CD4-positive, alpha-beta memory T cell (primary cell): ENCODE measurements at regions of chr19 and their contacts with region 1.

Region 1: DNA sequence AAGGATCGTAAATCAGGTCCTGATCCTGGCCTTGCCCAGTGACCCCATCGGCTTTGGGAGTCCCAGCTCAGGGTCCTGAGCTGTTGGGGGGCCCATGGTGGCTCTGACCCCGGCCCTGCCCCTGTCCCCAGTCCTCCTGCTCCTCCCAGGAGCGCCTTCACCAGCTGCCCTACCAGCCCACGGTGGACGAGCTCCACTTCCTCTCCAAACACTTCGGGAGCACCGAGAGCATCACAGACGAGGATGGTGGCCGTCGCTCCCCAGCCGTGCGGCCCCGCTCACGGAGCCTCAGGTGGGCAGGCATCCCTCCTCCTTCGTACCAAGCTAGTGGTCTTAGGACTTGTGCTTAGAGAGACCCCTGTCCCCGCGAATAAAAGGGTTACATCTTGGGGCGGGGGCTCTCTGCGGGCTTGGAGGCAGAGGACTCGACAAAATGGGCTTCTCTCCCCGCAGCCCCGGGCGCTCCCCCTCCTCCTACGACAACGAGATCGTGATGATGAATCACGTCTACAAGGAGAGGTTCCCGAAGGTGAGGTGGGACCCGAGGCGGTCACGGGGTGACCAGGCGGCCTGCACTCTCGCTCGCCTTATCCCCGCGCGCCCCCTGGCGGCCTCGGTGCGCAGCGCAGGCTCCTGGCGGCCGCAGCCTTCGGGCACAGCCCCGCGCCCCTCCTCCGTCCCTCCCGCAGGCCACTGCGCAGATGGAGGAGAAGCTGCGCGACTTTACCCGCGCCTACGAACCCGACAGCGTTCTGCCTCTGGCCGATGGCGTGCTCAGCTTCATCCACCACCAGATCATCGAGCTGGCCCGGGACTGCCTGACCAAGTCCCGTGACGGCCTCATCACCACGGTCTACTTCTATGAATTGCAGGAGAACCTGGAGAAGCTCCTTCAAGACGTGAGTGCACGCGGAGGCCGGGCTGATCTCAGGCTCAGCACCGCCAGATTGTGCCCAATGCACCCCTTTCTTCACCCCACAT is 9.1 kb downstream of the MAST1 start:
- DNase-seq: peak; percentile 70 to 80 (median 73)
- H3K4me3 ChIP-seq: no peak overlapping the region
- H3K4me3 Mint-ChIP-seq: peak overlapping the region in 3 of 8 donors; percentile 43 to 57 (median 57)
- H3K27ac ChIP-seq: no peak overlapping the region
- H3K27ac Mint-ChIP-seq: no peak overlapping the region
- H3K4me1 ChIP-seq: peaks cover 9% of the 10 kb centered on the region
- H3K4me1 Mint-ChIP-seq: peaks cover 0 to 4% (median 0%) of the 10 kb centered on the region in 4 donors
- H3K27me3 ChIP-seq: peaks cover 5% of the 10 kb centered on the region
- H3K27me3 Mint-ChIP-seq: peaks cover 17 to 19% of the 10 kb centered on the region in 2 donors

Region 2: DNA sequence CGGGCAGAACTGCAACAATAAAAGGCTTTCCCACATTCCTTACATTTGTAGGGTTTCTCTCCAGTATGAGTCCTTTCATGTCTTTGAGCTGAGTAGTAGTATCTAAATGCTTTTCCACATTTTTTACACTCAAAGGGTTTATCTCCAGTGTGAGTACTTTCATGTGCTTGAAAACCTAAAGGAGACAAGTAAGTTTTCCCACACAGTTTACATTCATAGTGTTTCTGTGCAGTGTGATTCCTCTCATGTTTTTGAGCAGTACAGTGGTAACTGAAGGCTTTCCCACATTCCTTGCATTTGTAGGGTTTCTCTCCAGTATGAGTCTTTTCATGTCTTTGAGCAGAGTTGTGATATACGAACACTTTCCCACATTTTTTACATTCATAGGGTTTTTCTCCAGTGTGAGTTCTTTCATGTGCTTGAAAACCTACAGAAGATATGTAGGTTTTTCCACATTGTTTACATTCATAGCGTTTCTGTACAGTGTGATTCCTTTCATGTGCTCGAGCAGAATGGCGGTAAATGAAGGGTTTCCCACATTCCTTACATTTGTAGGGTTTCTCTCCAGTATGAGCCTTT is 599.7 kb before region 1 on chr19:
- CTCF ChIA-PET with region 1: no interaction called
- POLR2A ChIA-PET with region 1: no interaction called
- intact Hi-C with region 1: no loop called
- DNase-seq: no peak
- H3K4me3 ChIP-seq: no peak overlapping the region
- H3K4me3 Mint-ChIP-seq: no peak overlapping the region
- H3K27ac ChIP-seq: no peak overlapping the region
- H3K27ac Mint-ChIP-seq: no peak overlapping the region
- H3K4me1 ChIP-seq: no peaks in the 10 kb centered on the region
- H3K4me1 Mint-ChIP-seq: no peaks in the 10 kb centered on the region
- H3K27me3 ChIP-seq: no peaks in the 10 kb centered on the region
- H3K27me3 Mint-ChIP-seq: no peaks in the 10 kb centered on the region

Region 3: DNA sequence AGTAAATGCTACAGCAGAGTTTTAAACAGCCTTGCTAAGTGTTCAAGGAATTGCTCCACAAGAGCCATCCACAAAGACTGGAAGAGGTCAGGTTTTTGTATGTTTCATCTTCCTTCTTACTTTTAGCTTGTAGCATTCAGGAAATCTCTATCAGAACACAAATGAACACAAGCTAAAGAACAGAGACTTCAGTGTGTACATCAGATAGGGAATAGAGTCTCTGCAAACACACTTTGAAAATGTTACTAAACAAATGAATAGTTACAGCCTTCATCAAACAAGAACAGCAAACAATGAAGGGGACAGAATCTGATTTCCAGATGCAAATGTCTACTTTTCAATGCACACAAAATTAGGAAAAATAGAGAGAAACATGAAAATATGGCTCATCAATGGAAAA is 521.8 kb before region 1 on chr19:
- CTCF ChIA-PET with region 1: no interaction called
- POLR2A ChIA-PET with region 1: no interaction called
- intact Hi-C with region 1: no loop called
- DNase-seq: no peak
- H3K4me3 ChIP-seq: no peak overlapping the region
- H3K4me3 Mint-ChIP-seq: no peak overlapping the region
- H3K27ac ChIP-seq: no peak overlapping the region
- H3K27ac Mint-ChIP-seq: no peak overlapping the region
- H3K4me1 ChIP-seq: peaks cover 2% of the 10 kb centered on the region
- H3K4me1 Mint-ChIP-seq: peaks cover 14 to 26% (median 20%) of the 10 kb centered on the region in 4 donors
- H3K27me3 ChIP-seq: no peaks in the 10 kb centered on the region
- H3K27me3 Mint-ChIP-seq: no peaks in the 10 kb centered on the region

Region 4: GRCh38 chr19:12681074-12681951 is 166.1 kb before region 1 on chr19 and contains the start of gene DHPS:
- CTCF ChIA-PET with region 1: interaction called, 15 read pairs
- POLR2A ChIA-PET with region 1: no interaction called
- intact Hi-C with region 1: no loop called
- DNase-seq: peak; percentile 90 to 96 (median 94)
- H3K4me3 ChIP-seq: peak within 1 kb of the TSS; percentile 73 to 98
- H3K4me3 Mint-ChIP-seq: peak within 1 kb of the TSS; percentile 90 to 99 (median 98)
- H3K27ac ChIP-seq: peak within 1 kb of the TSS; percentile 98
- H3K27ac Mint-ChIP-seq: peak within 1 kb of the TSS; percentile 83 to 99 (median 97)
- H3K4me1 ChIP-seq: peaks cover 22% of the 10 kb centered on the region
- H3K4me1 Mint-ChIP-seq: peaks cover 12 to 35% (median 25%) of the 10 kb centered on the region in 4 donors
- H3K27me3 ChIP-seq: no peaks in the 10 kb centered on the region
- H3K27me3 Mint-ChIP-seq: no peaks in the 10 kb centered on the region
- total RNA-seq, gene DHPS: 195 to 197 TPM

Region 5: DNA sequence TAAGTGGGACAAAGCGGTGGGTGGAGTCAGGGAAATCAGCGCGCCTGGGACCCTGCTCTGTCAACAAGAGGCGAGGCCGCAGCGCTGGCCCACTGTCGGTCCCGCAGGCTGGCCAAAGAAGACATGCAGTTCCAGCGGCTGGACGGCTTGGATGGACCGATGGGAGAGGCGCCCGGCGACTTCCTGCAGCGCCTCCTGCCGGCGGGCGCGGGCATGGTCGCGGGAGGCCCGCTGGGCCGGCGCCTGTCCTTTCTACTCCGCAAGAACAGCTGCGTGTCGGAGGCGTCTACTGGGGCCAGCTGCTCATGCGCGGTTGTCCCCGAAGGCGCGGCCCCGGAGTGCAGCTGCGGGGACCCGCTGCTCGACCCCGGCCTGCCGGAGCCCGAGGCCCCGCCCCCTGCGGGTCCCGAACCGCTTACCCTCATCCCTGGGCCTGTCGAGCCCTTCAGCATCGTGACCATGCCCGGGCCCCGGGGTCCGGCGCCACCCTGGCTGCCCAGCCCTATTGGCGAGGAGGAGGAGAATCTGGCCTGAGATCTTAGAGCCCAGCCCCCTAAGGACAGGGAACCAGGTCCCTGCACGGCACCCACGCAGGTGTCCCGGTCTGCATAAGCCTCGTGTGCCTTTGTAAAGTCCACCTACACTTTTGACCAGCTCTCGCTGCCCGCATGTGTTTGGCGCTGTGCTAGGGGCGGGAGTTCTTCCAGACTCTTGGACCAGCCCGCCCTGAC is 89.7 kb before region 1 on chr19:
- CTCF ChIA-PET with region 1: interaction called, 200 read pairs
- POLR2A ChIA-PET with region 1: no interaction called
- intact Hi-C with region 1: loop called (anchors 1 kb)
- DNase-seq: peak in 4 of 5 donors; percentile 56 to 61 (median 58)
- H3K4me3 ChIP-seq: no peak overlapping the region
- H3K4me3 Mint-ChIP-seq: peak overlapping the region in 5 of 8 donors; percentile 5 to 41 (median 32)
- H3K27ac ChIP-seq: no peak overlapping the region
- H3K27ac Mint-ChIP-seq: no peak overlapping the region
- H3K4me1 ChIP-seq: peaks cover 3% of the 10 kb centered on the region
- H3K4me1 Mint-ChIP-seq: peaks cover 4 to 10% (median 5%) of the 10 kb centered on the region in 4 donors
- H3K27me3 ChIP-seq: no peaks in the 10 kb centered on the region
- H3K27me3 Mint-ChIP-seq: peaks cover 1 to 7% of the 10 kb centered on the region in 2 donors

Region 6: DNA sequence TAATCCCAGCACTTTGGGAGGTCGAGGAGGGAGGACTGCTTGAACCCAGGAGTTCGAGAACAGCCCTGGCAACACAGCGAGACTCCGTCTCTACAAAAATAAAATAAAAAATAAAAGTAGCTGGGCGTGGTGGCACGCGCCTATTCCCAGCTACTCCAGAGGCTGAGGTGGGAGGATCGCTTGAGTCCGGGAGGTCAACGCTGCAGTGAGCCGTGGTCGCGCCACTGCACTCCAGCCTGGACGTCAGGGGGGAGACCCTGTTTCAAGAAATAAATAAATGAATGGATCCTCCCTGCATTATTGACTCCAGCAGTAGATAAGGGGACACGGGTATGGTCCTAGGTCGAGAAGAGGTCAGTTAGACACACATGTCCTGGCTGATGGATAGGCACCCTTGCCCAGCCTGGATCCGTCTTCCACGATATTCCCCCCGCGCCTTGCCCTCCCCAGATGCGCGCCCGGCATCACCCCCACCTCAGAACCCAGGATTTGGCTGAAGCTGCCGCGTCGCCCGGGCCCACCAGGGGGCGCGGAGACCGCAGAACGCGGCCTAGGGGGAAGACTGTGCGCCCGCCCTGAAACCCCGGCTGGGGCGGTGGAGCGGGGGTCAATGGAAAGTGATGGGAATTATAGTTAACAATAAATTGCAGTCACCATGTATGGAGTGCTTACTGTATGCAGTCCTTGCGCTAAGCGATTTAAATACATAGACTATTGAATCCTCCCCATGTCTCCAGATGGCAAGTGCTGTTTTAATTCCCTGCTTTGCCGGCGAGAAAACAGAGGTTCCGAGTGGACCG is 70.0 kb before region 1 on chr19:
- CTCF ChIA-PET with region 1: interaction called, 17 read pairs
- POLR2A ChIA-PET with region 1: interaction called, 3 read pairs
- intact Hi-C with region 1: no loop called
- DNase-seq: peak; percentile 77 to 83 (median 80)
- H3K4me3 ChIP-seq: peak overlapping the region; percentile 69 to 76
- H3K4me3 Mint-ChIP-seq: peak overlapping the region; percentile 85 to 92 (median 87)
- H3K27ac ChIP-seq: peak overlapping the region; percentile 86
- H3K27ac Mint-ChIP-seq: peak overlapping the region; percentile 92 to 97 (median 94)
- H3K4me1 ChIP-seq: peaks cover 42% of the 10 kb centered on the region
- H3K4me1 Mint-ChIP-seq: peaks cover 25 to 52% (median 35%) of the 10 kb centered on the region in 4 donors
- H3K27me3 ChIP-seq: no peaks in the 10 kb centered on the region
- H3K27me3 Mint-ChIP-seq: no peaks in the 10 kb centered on the region

Region 7: DNA sequence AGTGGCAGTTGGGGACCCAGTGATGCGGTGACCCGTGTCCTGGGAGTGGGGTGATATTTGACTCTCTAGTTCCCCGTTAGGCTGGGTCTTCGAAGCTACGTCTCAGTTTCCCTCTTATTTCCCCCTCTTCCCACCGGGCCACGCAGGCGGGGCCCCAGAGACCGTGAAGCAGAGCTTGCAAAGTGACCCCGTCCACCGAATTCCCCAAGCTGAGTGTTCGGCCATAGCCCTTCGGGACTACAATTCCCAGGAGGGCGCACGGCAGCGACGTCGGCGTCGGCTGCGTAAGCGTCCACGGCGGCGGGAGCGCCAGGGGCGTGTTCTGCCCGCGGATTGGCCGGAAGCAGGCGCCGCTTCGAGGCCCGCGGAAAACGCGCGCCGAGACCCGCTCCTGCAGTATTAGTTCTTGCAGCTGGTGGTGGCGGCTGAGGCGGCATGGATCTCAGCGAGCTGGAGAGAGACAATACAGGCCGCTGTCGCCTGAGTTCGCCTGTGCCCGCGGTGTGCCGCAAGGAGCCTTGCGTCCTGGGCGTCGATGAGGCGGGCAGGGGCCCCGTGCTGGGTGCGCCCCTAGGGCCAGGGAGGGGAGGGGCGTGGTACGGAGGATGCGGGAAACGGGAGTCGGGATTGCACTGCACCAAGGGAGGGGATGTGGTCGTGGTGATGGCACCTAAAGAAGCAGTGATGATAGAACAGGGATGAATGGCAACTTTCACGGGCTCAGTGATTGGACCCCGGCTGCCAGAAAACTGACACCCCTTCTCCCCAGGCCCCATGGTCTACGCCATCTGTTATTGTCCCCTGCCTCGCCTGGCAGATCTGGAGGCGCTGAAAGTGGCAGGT is 41.0 kb before region 1 on chr19 and contains the start of gene RNASEH2A:
- CTCF ChIA-PET with region 1: interaction called, 15 read pairs
- POLR2A ChIA-PET with region 1: no interaction called
- intact Hi-C with region 1: no loop called
- DNase-seq: peak; percentile 82 to 86 (median 84)
- H3K4me3 ChIP-seq: peak within 1 kb of the TSS; percentile 53 to 84
- H3K4me3 Mint-ChIP-seq: peak within 1 kb of the TSS; percentile 75 to 98 (median 90)
- H3K27ac ChIP-seq: peak within 1 kb of the TSS; percentile 63
- H3K27ac Mint-ChIP-seq: peak within 1 kb of the TSS; percentile 75 to 94 (median 89)
- H3K4me1 ChIP-seq: peaks cover 24% of the 10 kb centered on the region
- H3K4me1 Mint-ChIP-seq: peaks cover 15 to 33% (median 22%) of the 10 kb centered on the region in 4 donors
- H3K27me3 ChIP-seq: no peaks in the 10 kb centered on the region
- H3K27me3 Mint-ChIP-seq: no peaks in the 10 kb centered on the region
- total RNA-seq, gene RNASEH2A: 10.5 to 12.6 TPM

Region 8: DNA sequence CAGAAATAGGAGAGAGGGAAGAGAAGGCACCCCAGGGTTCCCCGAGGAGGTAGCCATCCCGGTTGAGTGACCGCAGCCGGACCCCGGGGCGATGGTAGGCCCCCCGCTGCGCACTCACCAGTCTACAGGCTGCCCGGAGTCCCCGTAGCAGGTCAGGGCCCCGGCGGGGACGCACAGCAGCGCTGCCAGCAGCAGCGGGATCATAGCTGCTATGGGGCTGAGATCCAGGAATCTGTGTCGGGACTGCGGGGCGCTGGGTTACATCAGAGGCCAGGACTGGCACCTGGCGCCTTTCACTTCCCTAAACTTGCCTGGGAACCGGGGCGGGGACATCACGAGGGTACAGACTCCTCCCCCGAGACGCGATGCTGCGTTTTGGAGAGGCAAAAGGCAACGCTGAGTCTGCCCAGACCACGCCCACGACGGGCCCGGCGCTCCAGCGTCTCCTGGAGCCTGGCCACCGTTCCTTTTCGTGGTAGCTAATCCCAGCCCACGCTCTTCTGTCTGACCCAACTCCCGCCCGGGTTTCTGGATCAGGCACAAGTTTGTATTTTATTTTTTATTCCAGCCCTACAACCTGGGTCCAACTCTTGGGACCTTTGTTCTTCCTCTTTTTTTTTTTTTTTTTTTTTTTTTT is 33.8 kb after region 1 on chr19 and contains the start of gene DNASE2:
- CTCF ChIA-PET with region 1: interaction called, 10 read pairs
- POLR2A ChIA-PET with region 1: interaction called, 3 read pairs
- intact Hi-C with region 1: no loop called
- DNase-seq: peak; percentile 80 to 91 (median 84)
- H3K4me3 ChIP-seq: peak within 1 kb of the TSS; percentile 73 to 76
- H3K4me3 Mint-ChIP-seq: peak within 1 kb of the TSS; percentile 88 to 92 (median 89)
- H3K27ac ChIP-seq: peak within 1 kb of the TSS; percentile 66
- H3K27ac Mint-ChIP-seq: peak within 1 kb of the TSS; percentile 85 to 96 (median 93)
- H3K4me1 ChIP-seq: peaks cover 29% of the 10 kb centered on the region
- H3K4me1 Mint-ChIP-seq: peaks cover 10 to 46% (median 23%) of the 10 kb centered on the region in 4 donors
- H3K27me3 ChIP-seq: no peaks in the 10 kb centered on the region
- H3K27me3 Mint-ChIP-seq: no peaks in the 10 kb centered on the region
- total RNA-seq, gene DNASE2: 31.6 to 32.8 TPM

Region 9: DNA sequence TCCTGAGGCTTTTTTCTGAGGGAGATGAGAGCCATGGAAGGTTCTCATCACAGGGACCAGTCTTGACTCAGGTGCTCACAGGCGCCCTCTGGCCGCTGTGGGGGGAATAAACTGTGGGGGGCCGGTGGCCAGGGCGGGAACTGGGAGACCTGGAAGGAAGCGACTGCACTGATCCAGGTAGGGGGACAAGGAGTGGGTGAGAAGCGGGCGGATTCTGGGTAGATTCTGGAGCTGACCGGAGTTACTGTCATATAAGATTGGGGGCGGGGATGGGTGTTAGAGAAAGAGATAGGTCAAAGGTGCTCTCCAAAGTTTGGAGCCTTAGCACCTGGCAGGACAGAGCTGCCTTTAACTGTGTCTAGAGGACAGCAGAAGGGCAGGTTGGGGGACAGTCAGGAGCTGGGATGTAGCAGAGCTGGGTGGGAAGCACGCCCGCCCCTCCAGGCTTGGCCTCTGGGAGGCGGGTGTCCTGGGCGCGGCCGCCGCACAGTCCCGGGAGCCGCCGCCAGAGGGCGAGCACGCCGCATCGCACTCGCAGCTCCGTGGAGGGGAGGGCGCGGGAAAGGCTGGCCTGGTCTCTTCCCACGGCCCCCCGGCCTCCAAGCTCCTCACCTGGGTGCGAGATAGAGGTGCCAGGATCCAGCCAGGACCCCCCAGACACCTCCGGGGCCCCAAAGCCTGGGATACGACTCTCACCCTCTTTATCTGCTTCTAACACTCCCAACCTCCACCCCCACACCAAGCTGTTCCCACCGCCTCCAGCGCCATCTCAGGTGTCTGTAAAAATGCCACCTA is 117.8 kb after region 1 on chr19:
- CTCF ChIA-PET with region 1: no interaction called
- POLR2A ChIA-PET with region 1: no interaction called
- intact Hi-C with region 1: no loop called
- DNase-seq: peak; percentile 74 to 83 (median 77)
- H3K4me3 ChIP-seq: peak overlapping the region; percentile 61 to 65
- H3K4me3 Mint-ChIP-seq: peak overlapping the region; percentile 87 to 96 (median 92)
- H3K27ac ChIP-seq: peak overlapping the region; percentile 50
- H3K27ac Mint-ChIP-seq: peak overlapping the region; percentile 38 to 92 (median 74)
- H3K4me1 ChIP-seq: peaks cover 4% of the 10 kb centered on the region
- H3K4me1 Mint-ChIP-seq: peaks cover 5 to 10% (median 6%) of the 10 kb centered on the region in 4 donors
- H3K27me3 ChIP-seq: no peaks in the 10 kb centered on the region
- H3K27me3 Mint-ChIP-seq: no peaks in the 10 kb centered on the region